Activated naive CD4-positive, alpha-beta T cell treated with anti-CD3 and anti-CD28 coated beads, Interleukin-2, amount 10 ng/mL, durations not matched to agents 7 days and 5 days (primary cell): ENCODE measurements at regions of chr19 and their contacts with region 1.

Region 1: DNA sequence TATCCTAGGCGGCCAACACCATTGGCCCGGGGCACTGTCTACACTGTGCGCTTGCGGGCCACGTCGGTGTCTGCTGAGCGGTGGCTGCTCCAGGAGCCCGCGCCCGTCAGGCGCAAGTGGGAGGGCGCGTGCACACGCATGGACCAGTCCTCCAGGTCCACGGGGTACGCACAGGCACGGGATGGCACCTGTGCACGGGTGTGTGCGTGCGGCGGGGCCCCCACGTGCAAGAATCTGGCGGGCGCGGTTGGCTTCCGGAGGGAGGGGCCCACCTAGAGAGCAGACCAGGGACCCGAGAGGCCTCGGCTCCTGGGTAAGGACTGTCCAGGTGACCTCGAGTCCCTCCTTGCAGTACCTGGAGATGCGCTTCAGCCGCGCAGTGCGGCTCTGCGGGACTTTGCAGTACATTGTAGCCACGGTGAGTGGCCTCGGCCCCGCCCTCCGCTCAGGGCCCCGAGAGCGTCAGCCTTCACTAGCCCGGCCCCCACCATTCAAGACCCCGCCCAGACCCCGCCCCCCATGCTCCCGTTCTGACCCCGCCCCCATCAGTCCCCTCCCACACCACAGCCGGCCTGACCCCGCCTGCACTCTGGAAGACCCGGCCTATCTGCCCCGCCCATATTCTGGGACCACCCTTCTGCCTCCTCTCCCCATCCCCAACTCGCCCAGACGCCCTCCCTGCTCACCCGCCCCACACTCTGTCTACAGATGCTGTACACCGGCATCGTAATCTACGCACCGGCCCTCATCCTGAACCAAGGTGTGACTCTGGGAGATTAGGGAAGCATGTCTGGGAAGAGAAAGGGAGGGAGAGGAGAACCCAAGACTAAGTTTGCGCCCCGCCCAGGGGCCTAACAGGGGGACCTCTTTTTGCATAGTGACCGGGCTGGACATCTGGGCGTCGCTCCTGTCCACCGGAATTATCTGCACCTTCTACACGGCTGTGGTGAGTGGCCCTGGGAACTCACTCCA is 2.3 kb downstream of the SLC5A5 start:
- DNase-seq: peak; percentile 79
- H3K4me3 Mint-ChIP-seq: peak overlapping the region; percentile 90
- H3K27ac Mint-ChIP-seq: peak overlapping the region; percentile 87
- H3K4me1 Mint-ChIP-seq: peaks cover 29% of the 10 kb centered on the region
- H3K27me3 Mint-ChIP-seq: peaks cover 3% of the 10 kb centered on the region

Region 2: GRCh38 chr19:17932485-17933338 is 58.6 kb after region 1 on chr19 and contains the start of gene CCDC124:
- CTCF ChIA-PET with region 1: interaction called, 37 read pairs
- DNase-seq: peak; percentile 96
- H3K4me3 Mint-ChIP-seq: peak within 1 kb of the TSS; percentile 88
- H3K27ac Mint-ChIP-seq: peak within 1 kb of the TSS; percentile 89
- H3K4me1 Mint-ChIP-seq: peaks cover 22% of the 10 kb centered on the region
- H3K27me3 Mint-ChIP-seq: peaks cover 6% of the 10 kb centered on the region